Mucosa of descending colon (tissue), 3 donors: ENCODE measurements at regions of chr16 and their contacts with region 1.

Region 1: DNA sequence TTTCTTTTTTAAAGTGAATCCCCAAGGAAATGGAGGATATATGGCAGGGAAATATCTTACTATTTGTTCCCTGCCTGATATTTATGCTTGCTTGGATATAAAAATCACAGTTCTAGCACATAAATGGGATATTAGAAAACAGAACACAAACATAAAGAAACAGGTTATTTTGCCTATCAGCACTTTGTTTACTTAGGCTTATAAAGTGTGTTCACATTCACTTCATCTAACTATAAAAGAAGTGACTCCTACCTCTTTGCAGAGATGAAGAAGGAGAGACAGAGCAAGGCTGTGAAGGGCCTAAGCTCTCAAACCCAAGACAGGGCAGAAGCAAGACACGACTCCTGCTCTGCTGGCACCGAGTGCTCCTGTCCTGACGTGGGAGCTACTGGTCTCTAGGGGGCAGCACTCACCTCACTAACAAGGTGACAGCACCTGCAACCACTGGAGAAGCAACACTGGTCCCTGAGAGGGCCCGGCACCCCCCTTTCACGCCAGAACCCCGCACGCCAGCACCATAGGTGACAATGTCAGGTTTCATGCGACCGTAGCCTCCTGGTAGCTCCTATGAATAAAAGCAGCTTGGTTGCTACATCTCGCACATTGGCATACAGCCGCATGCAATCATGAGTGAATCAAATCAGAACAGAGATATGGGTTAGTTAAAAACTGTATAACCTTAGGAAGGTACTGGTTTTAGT is 32.0 kb downstream of the MBTPS1 start:
- DNase-seq: peak; percentile 64 to 88 (median 74)
- ATAC-seq: peak; percentile 92
- H3K4me3 ChIP-seq: no peak overlapping the region
- H3K4me1 ChIP-seq: no peaks in the 10 kb centered on the region
- CTCF ChIP-seq: peak; percentile 54

Region 2: DNA sequence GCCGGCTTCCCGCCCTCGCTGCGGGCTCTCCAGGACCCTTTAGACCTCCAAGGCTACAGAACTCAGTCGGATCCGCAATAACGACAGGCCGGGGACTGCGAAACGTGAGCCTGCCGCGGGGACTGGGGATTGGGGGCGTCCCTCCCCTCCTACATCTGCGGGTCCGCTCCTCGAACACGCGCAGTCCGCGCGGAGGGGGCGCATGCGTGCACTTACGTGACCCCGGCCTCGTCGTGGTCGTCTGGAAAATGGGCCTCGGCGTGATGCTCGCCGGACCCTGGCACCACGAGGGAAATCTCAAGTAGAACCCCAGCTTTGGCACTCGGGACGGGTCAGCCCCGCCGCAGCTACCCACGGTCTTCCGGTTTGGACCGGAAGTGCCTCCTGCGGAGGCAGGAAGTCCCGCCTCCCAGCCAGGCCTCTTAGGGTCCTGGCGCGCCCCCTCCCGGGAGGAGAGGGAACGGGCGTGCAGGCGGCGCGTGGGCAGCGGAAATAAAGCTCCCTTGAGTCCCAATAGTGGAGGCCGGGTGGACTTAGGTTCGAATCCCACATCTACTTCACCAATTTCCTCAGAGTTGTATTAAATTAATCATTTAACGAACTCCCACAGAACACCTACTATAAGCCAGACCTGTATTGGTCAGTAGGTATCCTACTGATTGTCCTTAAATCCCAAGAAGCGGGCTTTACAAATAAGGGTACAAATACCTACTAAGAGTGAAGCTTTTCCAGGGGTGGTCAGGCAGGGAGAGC is 102.1 kb after region 1 on chr16 and contains the start of gene TAF1C:
- intact Hi-C with region 1: loop called in 1 of 2 experiments (anchors 5 kb)
- DNase-seq: peak; percentile 94 to 97 (median 95)
- ATAC-seq: peak; percentile 100
- H3K4me3 ChIP-seq: peak within 1 kb of the TSS; percentile 87
- H3K4me1 ChIP-seq: peaks cover 9% of the 10 kb centered on the region
- CTCF ChIP-seq: peak; percentile 97
- total RNA-seq, gene TAF1C: 35.0 to 49.7 (median 42.2) TPM